CD8-positive, alpha-beta T cell (primary cell): ENCODE measurements at regions of chr3 and their contacts with region 1.

Region 1: DNA sequence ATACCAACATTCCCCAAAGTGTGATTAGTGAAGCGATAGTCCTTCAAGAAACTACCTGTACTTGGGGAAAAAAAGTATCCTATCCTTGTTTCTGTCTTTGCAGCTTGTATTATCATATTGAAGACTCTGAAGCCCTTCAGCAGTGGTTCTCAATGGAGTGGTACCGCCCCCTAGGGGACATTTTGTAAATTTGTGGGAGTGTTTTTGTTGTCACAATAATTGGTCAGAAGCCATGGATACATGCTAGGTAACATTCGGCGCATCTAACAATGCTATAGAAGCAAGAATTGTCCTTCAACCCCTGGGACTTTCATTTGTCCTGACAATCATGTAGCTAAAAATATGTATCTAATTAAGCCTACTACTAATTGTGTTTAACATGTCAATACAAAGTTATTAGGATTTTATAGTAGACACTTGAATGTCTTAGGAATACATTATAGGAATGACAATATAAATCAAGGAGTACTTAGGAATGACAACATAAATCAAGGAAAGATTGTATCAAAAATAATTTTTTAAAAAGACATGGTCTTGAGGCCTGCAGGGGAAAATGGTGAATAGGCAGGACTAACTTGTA is 53.7 kb downstream of the NMD3 start:
- DNase-seq: peak in 4 of 9 experiments; percentile 36 to 65 (median 46)
- ATAC-seq: peak; percentile 31
- H3K4me3 ChIP-seq: no peak overlapping the region
- H3K4me3 Mint-ChIP-seq: no peak overlapping the region
- H3K27ac ChIP-seq: no peak overlapping the region
- H3K27ac Mint-ChIP-seq: no peak overlapping the region
- H3K4me1 ChIP-seq: no peaks in the 10 kb centered on the region
- H3K4me1 Mint-ChIP-seq: peaks cover 2% of the 10 kb centered on the region
- H3K27me3 ChIP-seq: no peaks in the 10 kb centered on the region
- H3K27me3 Mint-ChIP-seq: no peaks in the 10 kb centered on the region
- CTCF ChIP-seq: peak; percentile 65

Region 2: DNA sequence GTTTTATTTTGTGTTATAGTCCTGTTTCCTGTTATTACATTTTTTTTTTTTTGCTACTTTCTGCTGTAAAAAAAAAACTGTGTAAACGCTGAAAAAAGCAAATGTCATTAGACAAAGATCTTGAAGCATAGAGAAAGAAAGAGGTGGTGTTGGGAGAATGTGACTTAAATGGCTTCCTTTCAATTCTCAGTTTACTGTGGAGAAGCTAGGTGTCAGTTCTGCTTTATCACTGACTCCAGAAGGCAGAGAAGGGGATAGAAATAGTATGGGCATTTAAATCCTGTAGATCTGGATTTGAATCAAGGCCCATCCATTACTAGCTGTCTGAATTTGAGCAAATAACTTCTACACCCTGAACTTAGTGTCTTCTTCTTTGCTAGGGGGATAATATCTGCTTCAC is 495.8 kb before region 1 on chr3:
- CTCF ChIA-PET with region 1: no interaction called
- POLR2A ChIA-PET with region 1: no interaction called
- intact Hi-C with region 1: no loop called
- DNase-seq: no peak
- ATAC-seq: no peak
- H3K4me3 ChIP-seq: no peak overlapping the region
- H3K4me3 Mint-ChIP-seq: no peak overlapping the region
- H3K27ac ChIP-seq: no peak overlapping the region
- H3K27ac Mint-ChIP-seq: no peak overlapping the region
- H3K4me1 ChIP-seq: no peaks in the 10 kb centered on the region
- H3K4me1 Mint-ChIP-seq: no peaks in the 10 kb centered on the region
- H3K27me3 ChIP-seq: no peaks in the 10 kb centered on the region
- H3K27me3 Mint-ChIP-seq: peaks cover 1% of the 10 kb centered on the region
- CTCF ChIP-seq: no peak

Region 3: DNA sequence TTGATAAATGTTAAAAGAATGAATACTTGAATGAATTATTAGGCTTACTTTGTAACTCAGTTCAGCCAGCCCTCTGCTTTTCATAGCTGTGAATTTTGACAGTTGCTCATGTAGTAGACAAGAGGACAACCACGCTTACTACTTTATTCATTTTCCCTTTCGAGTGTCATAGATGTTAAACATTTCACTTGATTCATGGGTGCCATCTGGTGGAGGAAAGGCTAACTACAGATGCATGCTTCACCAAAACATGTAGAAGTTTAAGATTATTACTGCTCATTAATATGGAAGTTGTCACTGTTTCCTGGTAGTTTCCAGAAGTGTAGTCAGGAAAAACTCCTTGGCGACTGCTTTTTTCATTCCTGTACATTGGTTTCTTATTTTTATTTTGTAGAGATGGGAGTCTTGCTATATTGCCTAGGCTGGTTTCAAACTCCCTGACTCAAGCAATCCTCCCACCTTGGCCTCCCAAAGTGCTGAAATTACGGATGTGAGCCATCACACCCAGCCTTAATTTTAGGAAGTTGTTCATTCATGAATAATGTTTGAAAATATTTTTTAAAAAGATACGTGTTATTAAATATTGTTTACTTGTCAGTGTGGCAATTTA is 332.8 kb before region 1 on chr3:
- CTCF ChIA-PET with region 1: no interaction called
- POLR2A ChIA-PET with region 1: no interaction called
- intact Hi-C with region 1: loop called in 1 of 2 experiments (anchors 10 kb)
- DNase-seq: peak; percentile 50 to 77 (median 70)
- ATAC-seq: peak; percentile 66
- H3K4me3 ChIP-seq: no peak overlapping the region
- H3K4me3 Mint-ChIP-seq: no peak overlapping the region
- H3K27ac ChIP-seq: no peak overlapping the region
- H3K27ac Mint-ChIP-seq: no peak overlapping the region
- H3K4me1 ChIP-seq: no peaks in the 10 kb centered on the region
- H3K4me1 Mint-ChIP-seq: peaks cover 3% of the 10 kb centered on the region
- H3K27me3 ChIP-seq: no peaks in the 10 kb centered on the region
- H3K27me3 Mint-ChIP-seq: no peaks in the 10 kb centered on the region
- CTCF ChIP-seq: peak; percentile 84

Region 4: GRCh38 chr3:161284989-161285388 is 10.2 kb after region 1 on chr3:
- CTCF ChIA-PET with region 1: interaction called, 12 read pairs
- POLR2A ChIA-PET with region 1: interaction called, 3 read pairs
- intact Hi-C with region 1: no loop called
- DNase-seq: no peak
- ATAC-seq: no peak
- H3K4me3 ChIP-seq: no peak overlapping the region
- H3K4me3 Mint-ChIP-seq: no peak overlapping the region
- H3K27ac ChIP-seq: no peak overlapping the region
- H3K27ac Mint-ChIP-seq: no peak overlapping the region
- H3K4me1 ChIP-seq: no peaks in the 10 kb centered on the region
- H3K4me1 Mint-ChIP-seq: no peaks in the 10 kb centered on the region
- H3K27me3 ChIP-seq: no peaks in the 10 kb centered on the region
- H3K27me3 Mint-ChIP-seq: no peaks in the 10 kb centered on the region
- CTCF ChIP-seq: no peak

Region 5: DNA sequence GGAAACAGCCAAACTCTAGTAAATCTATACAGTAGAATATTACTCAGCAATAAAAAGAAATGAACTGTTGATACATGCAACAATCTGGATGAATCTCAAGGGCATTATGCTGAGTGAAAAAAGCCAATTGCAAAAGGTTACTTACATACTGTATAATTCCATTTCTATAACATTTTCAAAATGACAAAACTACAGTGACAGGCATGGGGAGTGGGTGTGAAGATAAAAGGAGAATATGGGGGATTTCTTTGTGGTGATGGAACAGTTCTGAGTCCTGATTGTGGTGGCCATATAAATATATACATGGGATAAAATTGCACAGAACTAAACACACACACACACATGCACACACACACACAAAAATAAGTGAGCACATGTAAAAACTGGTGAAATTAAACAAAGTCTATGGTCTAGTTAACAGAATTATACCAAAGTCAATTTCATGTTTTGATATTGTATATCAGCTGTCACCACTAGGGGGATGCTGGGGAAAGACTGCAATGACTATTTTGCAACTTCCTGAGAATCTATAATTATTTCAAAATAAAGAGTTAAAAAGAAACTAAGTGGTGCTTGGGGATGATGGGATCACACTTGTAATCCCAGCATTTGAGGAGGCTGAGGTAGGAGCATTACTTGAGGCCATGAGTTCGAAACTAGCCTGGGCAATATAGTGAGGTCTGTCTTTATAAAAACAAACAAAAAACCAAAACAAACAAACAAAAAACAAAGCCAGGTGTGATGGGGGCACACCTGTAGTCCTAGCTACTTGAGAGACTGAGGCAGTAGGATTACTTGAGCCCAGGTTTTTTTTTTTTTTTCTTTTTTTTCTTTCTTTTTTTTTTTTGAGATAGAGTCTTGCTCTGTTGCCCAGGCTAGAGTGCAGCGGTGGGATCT is 30.5 kb after region 1 on chr3:
- CTCF ChIA-PET with region 1: interaction called, 8 read pairs
- POLR2A ChIA-PET with region 1: no interaction called
- intact Hi-C with region 1: loop called in 1 of 2 experiments (anchors 2 kb)
- DNase-seq: peak in 3 of 9 experiments; percentile 18 to 52 (median 38)
- ATAC-seq: no peak
- H3K4me3 ChIP-seq: no peak overlapping the region
- H3K4me3 Mint-ChIP-seq: no peak overlapping the region
- H3K27ac ChIP-seq: no peak overlapping the region
- H3K27ac Mint-ChIP-seq: no peak overlapping the region
- H3K4me1 ChIP-seq: peaks cover 11% of the 10 kb centered on the region
- H3K4me1 Mint-ChIP-seq: peaks cover 29% of the 10 kb centered on the region
- H3K27me3 ChIP-seq: no peaks in the 10 kb centered on the region
- H3K27me3 Mint-ChIP-seq: peaks cover 3% of the 10 kb centered on the region
- CTCF ChIP-seq: peak; percentile 79

Region 6: GRCh38 chr3:162250782-162251181 is 976.0 kb after region 1 on chr3:
- CTCF ChIA-PET with region 1: no interaction called
- POLR2A ChIA-PET with region 1: no interaction called
- intact Hi-C with region 1: no loop called
- DNase-seq: no peak
- ATAC-seq: no peak
- H3K4me3 ChIP-seq: no peak overlapping the region
- H3K4me3 Mint-ChIP-seq: no peak overlapping the region
- H3K27ac ChIP-seq: no peak overlapping the region
- H3K27ac Mint-ChIP-seq: no peak overlapping the region
- H3K4me1 ChIP-seq: no peaks in the 10 kb centered on the region
- H3K4me1 Mint-ChIP-seq: no peaks in the 10 kb centered on the region
- H3K27me3 ChIP-seq: no peaks in the 10 kb centered on the region
- H3K27me3 Mint-ChIP-seq: no peaks in the 10 kb centered on the region
- CTCF ChIP-seq: no peak